ENCODE measurements at regions of chr7 and their contacts with region 1.

Region 1: DNA sequence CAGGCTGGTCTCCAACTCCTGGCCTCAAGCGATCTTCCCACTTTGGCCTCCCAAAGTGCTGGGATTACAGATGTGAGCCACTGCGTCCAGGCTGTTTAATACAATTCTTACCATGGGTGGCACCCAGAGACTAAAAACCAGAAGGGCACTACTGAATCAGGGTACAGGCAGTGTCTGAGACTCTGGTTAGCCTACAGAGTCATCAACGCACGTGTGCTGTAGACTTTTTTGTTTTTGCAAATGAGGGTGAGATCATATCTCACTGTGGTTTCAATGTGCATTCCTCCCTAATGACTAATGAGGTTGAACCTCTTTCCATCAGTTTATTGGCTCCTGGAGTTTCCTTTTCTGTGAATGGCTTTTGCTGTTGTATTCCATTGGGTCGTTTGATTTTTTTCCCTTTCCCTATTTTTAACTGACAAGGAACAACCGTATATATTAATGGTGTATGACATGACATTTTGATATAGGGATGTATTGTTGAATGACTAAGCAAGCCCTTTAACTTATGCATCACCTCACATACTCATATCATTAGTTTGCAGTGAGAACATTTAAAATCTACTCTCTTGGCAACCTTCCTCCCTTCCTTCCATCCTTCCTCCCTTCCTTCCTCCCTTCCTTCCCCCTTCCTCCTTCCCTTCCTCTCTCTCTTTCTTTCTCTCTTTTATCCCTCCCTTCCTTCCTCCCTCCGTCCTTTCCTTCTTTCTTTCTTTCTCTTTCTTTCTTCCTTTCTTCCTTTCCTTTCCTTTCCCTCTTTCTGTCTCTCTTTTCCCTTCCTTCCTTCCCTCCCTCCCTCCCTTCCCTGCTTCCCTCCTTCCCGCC is 9.3 kb upstream of the METTL27 start:
- DNase-seq: peak; percentile 37
- ATAC-seq: peak; percentile 65
- H3K4me3 Mint-ChIP-seq: no peak overlapping the region
- H3K27ac Mint-ChIP-seq: no peak overlapping the region
- H3K4me1 Mint-ChIP-seq: peaks cover 24% of the 10 kb centered on the region
- H3K27me3 Mint-ChIP-seq: peaks cover 15% of the 10 kb centered on the region

Region 2: DNA sequence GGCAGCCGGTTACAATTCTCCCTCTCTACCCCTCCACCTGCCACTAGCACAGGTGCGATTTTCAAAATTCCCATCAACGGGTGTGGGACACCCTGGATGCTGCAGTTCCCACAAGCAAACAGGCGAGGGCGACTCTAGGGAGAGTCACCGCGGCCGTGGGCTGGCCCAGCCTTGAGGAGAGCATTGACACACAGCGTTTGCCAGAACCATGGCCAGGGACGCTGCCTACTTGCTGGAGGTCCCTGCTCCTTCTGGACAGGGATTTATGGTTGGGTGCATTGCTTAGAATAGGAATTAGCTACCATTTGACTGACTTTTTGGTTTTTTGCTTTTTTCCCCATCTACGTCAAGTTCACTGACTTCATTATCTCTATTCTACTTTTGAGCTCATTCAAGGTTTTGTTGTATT is 39.9 kb before region 1 on chr7:
- CTCF ChIA-PET with region 1: interaction called, 42 read pairs
- POLR2A ChIA-PET with region 1: no interaction called
- DNase-seq: peak; percentile 59
- ATAC-seq: peak; percentile 86
- H3K4me3 Mint-ChIP-seq: no peak overlapping the region
- H3K27ac Mint-ChIP-seq: no peak overlapping the region
- H3K4me1 Mint-ChIP-seq: no peaks in the 10 kb centered on the region
- H3K27me3 Mint-ChIP-seq: no peaks in the 10 kb centered on the region

Region 3: DNA sequence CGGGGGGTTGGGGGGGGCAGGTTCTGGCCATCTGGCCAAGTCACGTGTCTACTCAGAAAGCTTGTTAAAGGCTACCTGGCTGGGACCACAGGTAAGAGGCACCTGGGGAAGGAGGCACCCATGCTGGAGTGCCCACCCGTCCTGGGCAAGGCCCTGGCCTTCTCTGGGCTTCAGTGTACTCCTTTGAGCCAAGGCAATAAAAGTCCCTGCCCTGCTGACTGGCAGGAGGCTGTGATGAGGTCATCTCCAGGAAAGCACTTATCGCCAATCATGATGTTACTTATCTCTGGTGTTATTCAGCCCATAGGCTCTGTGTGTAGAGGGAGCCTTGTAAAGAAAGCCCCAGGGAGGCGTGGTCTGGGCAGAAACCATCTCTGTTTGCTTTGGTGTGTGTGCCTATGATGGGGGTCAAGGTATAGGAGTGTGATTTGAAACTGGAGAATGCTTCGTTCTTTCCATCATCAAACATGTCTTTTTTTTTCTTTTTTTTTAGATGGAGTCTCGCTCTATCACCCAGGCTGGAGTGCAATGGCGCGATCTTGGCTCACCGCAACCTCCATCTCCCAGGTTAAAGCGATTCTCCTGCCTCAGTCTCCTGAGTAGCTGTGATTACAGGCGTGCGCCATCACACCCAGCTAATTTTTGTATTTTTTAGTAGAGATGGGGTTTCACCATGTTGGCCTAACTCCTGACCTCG is 23.4 kb before region 1 on chr7:
- CTCF ChIA-PET with region 1: interaction called, 14 read pairs
- POLR2A ChIA-PET with region 1: no interaction called
- DNase-seq: no peak
- ATAC-seq: peak; percentile 32
- H3K4me3 Mint-ChIP-seq: no peak overlapping the region
- H3K27ac Mint-ChIP-seq: no peak overlapping the region
- H3K4me1 Mint-ChIP-seq: peaks cover 26% of the 10 kb centered on the region
- H3K27me3 Mint-ChIP-seq: peaks cover 18% of the 10 kb centered on the region

Measured in activated CD8-positive, alpha-beta T cell treated with anti-CD3 and anti-CD28 coated beads, Interleukin-2, amount 10 ng/mL, durations not matched to agents 7 days and 5 days (primary cell).